ENCODE measurements at regions of chr1 and their contacts with region 1.

Region 1: DNA sequence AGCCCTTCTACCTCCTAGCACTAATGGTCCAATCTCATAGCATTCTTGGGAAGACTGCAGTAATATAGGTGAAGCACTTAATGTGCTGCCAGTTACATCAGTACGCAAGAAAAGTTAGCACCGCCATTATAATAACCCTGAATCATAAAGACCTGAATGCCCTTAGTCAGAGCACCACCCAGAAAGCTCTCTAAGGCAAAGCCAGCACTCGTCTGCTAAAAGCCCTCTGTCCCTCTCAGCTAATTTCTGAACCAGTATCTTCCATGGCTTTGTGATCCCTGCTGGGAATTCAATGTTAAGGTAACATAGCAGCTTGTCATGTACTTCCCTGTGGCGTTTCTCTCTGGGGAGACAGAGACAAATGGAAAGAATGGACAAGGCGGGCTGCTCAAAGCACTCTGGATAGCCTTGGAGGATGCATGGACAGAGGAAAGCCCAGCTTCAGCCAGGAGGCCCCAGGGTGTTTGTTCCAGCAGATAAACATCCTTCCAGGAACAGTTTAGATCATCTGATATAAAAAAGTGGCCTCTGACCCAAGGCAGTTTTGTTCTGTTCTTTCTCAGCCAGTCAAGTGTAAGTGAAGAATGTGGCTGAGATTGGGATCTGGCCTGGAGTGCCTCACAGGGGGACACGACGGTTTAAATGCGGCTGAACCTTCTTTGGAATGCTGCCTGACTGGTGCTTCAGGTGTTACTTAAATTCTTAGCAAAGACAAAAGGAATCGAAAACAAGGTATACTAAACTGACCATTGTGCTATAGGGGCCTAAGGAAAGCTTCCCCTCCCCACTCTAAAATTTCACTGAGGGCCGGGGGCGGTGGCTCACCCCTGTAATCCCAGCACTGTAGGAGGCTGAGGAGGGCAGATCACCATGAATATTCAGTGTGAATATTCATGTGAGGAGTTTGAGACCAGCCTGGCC is 58.1 kb upstream of the VTCN1 start:
- DNase-seq: peak; percentile 92 to 100
- H3K4me3 ChIP-seq: peak overlapping the region; percentile 21; the same call in 1 of the 2 replicates
- H3K27ac ChIP-seq: peak overlapping the region; percentile 74
- H3K4me1 ChIP-seq: peaks cover 55% of the 10 kb centered on the region
- H3K27me3 ChIP-seq: no peaks in the 10 kb centered on the region
- CTCF ChIP-seq: no peak

Region 2: DNA sequence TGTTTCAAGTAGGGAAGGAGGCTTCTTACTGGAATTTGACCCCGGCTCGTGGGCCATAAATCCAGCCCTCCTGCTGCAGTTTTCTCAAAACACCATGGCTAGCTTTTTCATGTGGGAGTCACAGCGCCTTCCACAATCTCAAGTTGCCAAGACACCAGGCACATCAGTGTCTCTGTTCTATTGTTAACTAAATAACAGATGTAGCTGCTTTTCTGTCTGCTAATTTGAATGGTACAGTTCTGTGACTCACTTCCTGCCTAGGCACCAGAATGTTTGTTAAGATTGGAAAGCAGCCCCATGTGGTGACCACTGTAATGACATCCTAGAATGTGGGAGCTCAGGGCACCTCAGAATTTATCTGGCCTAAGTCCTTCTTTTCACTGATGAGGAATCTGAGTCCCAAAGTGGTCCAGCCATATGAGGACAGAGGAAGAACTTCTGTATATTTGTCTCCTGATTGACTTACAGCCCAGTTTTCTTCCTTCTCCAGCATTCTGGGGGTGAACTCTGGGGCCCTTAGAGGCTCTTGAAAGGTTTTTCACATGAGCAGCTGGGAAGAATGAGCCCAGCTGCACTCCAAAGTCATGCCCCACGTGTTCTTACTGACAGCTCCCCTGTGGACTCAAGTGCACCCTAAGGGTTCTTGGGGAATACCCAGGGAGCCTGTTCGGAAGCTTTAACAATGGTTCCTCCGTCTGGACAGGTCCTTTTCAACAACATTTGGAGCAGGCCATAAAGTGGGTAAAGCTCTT is 174.7 kb before region 1 on chr1:
- CTCF ChIA-PET with region 1: no interaction called
- POLR2A ChIA-PET with region 1: interaction called, 5 read pairs
- intact Hi-C with region 1: loop called (anchors 1 kb)
- DNase-seq: peak; percentile 31 to 47
- H3K4me3 ChIP-seq: no peak overlapping the region
- H3K27ac ChIP-seq: peak overlapping the region; percentile 35
- H3K4me1 ChIP-seq: peaks cover 13% of the 10 kb centered on the region; the same call in 1 of the 2 replicates
- H3K27me3 ChIP-seq: no peaks in the 10 kb centered on the region
- CTCF ChIP-seq: peak; percentile 65

Region 3: DNA sequence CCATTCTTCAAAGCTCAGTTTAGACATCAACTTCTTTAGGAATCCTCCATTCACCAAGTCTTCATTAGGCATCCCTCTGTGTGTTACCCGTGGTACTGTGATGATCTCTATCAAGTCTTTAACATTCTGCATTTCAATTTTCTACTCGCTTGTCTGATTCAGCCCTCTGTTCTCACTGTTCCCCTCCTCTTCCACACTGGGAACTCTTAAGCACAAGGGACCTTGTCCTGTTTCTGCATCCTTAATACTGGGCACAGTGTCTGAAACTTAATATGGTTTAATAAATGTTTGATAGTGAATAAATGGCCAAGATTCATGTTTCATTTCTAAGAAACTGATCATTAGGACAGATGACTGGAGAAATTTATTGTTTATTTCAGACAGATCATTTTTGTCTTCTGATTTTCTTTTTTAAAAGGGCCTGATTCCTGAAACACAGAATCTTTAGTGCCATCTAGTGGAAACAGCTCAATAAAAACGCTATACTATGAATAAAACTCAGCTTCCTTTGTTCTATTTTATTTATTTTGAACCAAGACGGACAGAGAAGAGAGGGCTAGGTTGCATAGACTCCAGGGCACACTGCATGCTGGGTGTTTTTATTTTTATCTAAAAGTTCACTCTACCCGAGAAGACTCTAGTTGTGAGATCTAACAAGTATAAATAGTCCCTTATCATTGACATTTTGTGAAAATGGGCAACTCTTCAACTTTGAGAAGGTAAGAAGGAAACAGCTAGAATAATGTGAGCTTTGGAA is 140.3 kb before region 1 on chr1:
- CTCF ChIA-PET with region 1: interaction called, 5 read pairs
- POLR2A ChIA-PET with region 1: interaction called, 5 read pairs
- intact Hi-C with region 1: loop called (anchors 1 kb)
- DNase-seq: peak in 1 of 2 experiments; percentile 47
- H3K4me3 ChIP-seq: no peak overlapping the region
- H3K27ac ChIP-seq: no peak overlapping the region
- H3K4me1 ChIP-seq: peaks cover 14% of the 10 kb centered on the region; the same call in 1 of the 2 replicates
- H3K27me3 ChIP-seq: no peaks in the 10 kb centered on the region
- CTCF ChIP-seq: peak; percentile 82

Region 4: GRCh38 chr1:117146570-117147346 is 122.0 kb before region 1 on chr1:
- CTCF ChIA-PET with region 1: no interaction called
- POLR2A ChIA-PET with region 1: no interaction called
- intact Hi-C with region 1: loop called (anchors 1 kb)
- DNase-seq: peak; percentile 79 to 99
- H3K4me3 ChIP-seq: peak overlapping the region; percentile 27; the same call in 1 of the 2 replicates
- H3K27ac ChIP-seq: peak overlapping the region; percentile 89
- H3K4me1 ChIP-seq: peaks cover 41% of the 10 kb centered on the region
- H3K27me3 ChIP-seq: no peaks in the 10 kb centered on the region
- CTCF ChIP-seq: no peak

Region 5: DNA sequence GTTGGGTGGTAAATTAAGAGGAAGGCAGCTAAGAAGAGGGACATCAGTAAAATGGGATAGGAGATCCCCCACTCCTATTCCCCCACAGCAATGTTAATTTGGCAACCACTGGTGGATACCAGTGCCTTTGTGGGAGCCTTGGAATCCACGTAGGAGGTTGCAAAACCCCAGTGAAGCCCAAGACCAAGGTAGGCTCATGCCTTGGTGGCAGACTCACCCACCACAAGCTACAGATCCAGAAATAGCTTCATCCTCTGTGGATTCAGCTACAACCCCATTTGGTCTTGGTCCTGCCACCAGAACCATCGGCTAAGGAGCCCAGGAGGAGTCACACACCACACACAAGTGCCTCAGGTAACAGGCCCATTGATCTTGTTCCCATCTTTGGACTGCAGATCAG is 79.1 kb before region 1 on chr1:
- CTCF ChIA-PET with region 1: no interaction called
- POLR2A ChIA-PET with region 1: no interaction called
- intact Hi-C with region 1: no loop called
- DNase-seq: no peak
- H3K4me3 ChIP-seq: no peak overlapping the region
- H3K27ac ChIP-seq: no peak overlapping the region
- H3K4me1 ChIP-seq: 0 out of 2 replicates have a peak, but pooled peaks cover 8% of the 10 kb centered on the region
- H3K27me3 ChIP-seq: no peaks in the 10 kb centered on the region
- CTCF ChIP-seq: no peak

Region 6: DNA sequence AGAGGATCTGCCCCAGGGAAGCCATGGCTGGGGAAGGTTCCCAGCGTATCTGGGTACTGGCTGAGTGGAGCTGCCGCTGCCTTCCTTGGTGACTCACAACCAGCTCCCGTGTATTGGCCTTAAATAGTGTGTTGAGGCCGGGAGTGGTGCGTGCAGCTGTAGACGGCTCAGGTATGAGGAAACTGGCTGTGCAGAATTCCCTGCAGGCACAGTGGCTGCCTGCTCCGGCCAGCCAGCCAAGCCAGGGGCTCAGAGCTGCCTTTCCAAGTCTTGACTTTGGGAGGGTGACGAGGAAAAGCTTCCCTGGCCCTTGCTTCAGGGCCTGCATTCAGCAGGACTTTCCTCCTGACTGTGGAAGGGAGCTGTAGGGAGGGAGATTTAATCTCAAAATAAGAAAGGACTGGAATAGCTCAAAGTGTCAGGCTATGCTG is 57.9 kb before region 1 on chr1 and contains the start of gene VTCN1:
- CTCF ChIA-PET with region 1: interaction called, 3 read pairs
- POLR2A ChIA-PET with region 1: no interaction called
- intact Hi-C with region 1: loop called (anchors 1 kb)
- DNase-seq: peak; percentile 91 to 98
- H3K4me3 ChIP-seq: peak within 1 kb of the TSS; percentile 22; the same call in 1 of the 2 replicates
- H3K27ac ChIP-seq: peak within 1 kb of the TSS; percentile 64
- H3K4me1 ChIP-seq: peaks cover 35% of the 10 kb centered on the region
- H3K27me3 ChIP-seq: no peaks in the 10 kb centered on the region
- CTCF ChIP-seq: no peak
- total RNA-seq, gene VTCN1: 3.6 and 5.0 TPM in 2 replicates

Region 7: DNA sequence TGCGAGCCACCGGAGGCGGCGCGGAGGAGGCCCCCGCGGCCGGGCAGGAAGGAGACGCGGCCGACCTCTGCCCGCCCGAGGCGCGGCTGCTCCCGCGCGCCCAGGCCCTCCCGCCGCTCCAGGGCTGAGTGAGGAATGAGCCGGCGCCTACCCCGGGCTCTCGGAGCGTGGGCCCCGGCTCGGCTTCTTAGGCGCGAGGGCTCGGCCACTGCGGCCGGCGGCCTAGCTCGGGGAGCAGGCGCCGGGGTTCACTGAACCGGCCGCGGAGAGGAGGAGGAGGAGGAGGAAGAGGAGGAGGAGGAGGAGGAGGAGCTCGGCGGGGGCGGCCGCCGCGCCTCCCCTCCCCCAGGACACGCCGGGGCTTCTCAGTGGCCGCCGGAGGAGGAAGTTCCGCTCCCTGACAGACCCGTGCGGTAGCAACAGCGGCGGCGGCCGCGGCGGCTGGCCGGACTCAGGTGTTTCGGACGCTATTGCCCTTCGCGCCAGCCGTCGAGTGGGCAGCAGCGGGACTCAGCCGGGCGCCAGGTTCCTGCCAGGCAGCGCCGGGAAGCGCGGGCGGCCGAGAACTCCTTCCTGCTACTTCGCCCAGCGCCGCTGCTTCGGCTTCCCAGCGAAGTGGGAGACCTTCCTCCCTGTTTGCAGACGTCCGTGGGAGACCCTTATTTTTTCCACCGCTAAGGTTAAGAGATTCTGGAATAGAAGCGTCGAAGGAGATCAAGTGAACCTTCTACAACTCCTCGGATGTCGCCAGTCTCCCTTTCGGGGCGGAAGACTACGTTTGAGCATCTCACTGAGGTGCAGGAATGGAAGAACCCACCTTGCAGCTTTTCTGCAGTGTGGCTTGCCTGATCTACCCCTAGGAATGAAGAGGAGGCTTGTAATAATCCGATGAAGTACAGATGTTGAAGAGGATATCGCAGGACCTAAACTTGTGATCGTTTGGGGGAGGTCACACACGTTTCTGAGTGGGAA is 98.5 kb after region 1 on chr1 and contains the start of gene MAN1A2:
- CTCF ChIA-PET with region 1: no interaction called
- POLR2A ChIA-PET with region 1: no interaction called
- intact Hi-C with region 1: loop called (anchors 2 kb)
- DNase-seq: peak; percentile 85 to 96
- H3K4me3 ChIP-seq: peak within 1 kb of the TSS; percentile 66
- H3K27ac ChIP-seq: peak within 1 kb of the TSS; percentile 77
- H3K4me1 ChIP-seq: peaks cover 61% of the 10 kb centered on the region
- H3K27me3 ChIP-seq: no peaks in the 10 kb centered on the region
- CTCF ChIP-seq: no peak
- total RNA-seq, gene MAN1A2: 39.8 and 50.3 TPM in 2 replicates

Region 8: GRCh38 chr1:117590271-117590925 is 321.6 kb after region 1 on chr1:
- CTCF ChIA-PET with region 1: no interaction called
- POLR2A ChIA-PET with region 1: no interaction called
- intact Hi-C with region 1: no loop called
- DNase-seq: peak in 1 of 2 experiments; percentile 48
- H3K4me3 ChIP-seq: no peak overlapping the region
- H3K27ac ChIP-seq: no peak overlapping the region
- H3K4me1 ChIP-seq: peaks cover 21% of the 10 kb centered on the region
- H3K27me3 ChIP-seq: no peaks in the 10 kb centered on the region
- CTCF ChIP-seq: no peak